ENCODE measurements at regions of chr18 and their contacts with region 1.

Region 1: GRCh38 chr18:74342416-74343043 is 26.9 kb downstream of the C18orf63 start:
- DNase-seq: peak; percentile 77
- ATAC-seq: peak; percentile 54
- H3K4me3 ChIP-seq: no peak overlapping the region
- H3K27ac ChIP-seq: no peak overlapping the region
- H3K4me1 ChIP-seq: no peaks in the 10 kb centered on the region; the same call in 1 of the 2 replicates
- H3K27me3 ChIP-seq: peaks cover 2% of the 10 kb centered on the region; the same call in 1 of the 2 replicates
- CTCF ChIP-seq: peak; percentile 77
- POLR2A ChIP-seq: no peak
- RAD21 ChIP-seq: peak; percentile 88

Region 2: DNA sequence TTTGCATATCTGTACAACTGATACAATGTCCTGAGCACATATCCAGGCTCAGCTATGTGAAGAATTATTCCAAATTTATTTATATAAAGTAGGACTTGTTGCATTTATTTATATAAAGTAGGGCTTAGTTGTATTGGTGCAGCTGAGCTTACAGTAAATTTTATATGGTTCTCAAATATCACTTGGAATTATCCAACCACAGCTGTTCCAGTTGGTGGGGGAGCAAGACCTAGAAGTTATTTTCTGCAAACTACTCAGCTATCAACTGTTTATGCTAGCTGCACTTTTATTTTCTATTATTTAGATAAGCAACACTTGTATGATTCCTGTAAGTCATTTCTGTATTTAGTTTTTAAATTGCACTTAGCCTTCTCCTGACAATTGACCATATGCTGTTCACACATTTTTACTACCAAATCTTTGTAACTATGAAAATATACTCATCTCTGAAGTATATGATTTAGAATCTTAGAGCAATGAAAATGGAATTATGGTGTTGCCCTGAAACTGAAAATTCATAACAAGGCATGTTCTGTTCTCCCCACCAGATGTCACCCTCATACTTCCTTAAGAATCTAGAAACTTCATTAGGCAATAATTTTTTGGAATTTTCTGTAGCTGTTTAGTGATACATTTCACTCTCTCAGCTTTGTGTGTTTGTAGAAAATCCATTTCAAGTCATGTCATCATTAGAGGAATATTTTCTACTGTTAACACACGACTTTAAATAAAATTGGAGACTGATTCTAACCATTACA is 1641.4 kb before region 1 on chr18:
- CTCF ChIA-PET with region 1: interaction called, 3 read pairs
- POLR2A ChIA-PET with region 1: no interaction called
- dilution Hi-C with region 1: no loop called
- in situ Hi-C with region 1: no loop called
- intact Hi-C with region 1: loop called (anchors 5 kb)
- DNase-seq: peak; percentile 14
- ATAC-seq: no peak
- H3K4me3 ChIP-seq: no peak overlapping the region
- H3K27ac ChIP-seq: no peak overlapping the region
- H3K4me1 ChIP-seq: no peaks in the 10 kb centered on the region
- H3K27me3 ChIP-seq: no peaks in the 10 kb centered on the region
- CTCF ChIP-seq: peak; percentile 48
- POLR2A ChIP-seq: no peak
- RAD21 ChIP-seq: peak; percentile 47

Region 3: DNA sequence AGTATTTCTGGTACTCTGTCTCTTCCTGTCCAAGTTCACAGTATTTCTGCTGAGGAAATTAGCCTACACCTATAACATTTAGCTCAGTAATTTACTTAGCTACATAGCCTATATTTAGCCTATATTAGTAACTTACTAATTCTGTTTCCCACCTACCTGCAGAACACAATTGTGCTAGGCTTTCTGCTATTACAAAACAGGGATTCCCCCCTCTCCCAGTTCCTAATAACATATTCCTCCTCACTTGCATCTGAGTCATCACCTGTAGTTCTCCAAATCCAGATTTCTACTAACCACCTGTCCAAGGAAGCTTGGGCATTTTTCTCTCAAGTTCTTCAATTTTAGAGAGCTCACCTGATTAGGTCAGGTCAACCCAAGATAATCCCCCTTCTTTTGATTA is 1569.6 kb before region 1 on chr18:
- CTCF ChIA-PET with region 1: no interaction called
- POLR2A ChIA-PET with region 1: no interaction called
- dilution Hi-C with region 1: no loop called
- in situ Hi-C with region 1: loop called (anchors 10 kb)
- intact Hi-C with region 1: no loop called
- DNase-seq: no peak
- ATAC-seq: no peak
- H3K4me3 ChIP-seq: no peak overlapping the region
- H3K27ac ChIP-seq: no peak overlapping the region
- H3K4me1 ChIP-seq: no peaks in the 10 kb centered on the region
- H3K27me3 ChIP-seq: no peaks in the 10 kb centered on the region
- CTCF ChIP-seq: no peak
- POLR2A ChIP-seq: no peak
- RAD21 ChIP-seq: no peak

Region 4: DNA sequence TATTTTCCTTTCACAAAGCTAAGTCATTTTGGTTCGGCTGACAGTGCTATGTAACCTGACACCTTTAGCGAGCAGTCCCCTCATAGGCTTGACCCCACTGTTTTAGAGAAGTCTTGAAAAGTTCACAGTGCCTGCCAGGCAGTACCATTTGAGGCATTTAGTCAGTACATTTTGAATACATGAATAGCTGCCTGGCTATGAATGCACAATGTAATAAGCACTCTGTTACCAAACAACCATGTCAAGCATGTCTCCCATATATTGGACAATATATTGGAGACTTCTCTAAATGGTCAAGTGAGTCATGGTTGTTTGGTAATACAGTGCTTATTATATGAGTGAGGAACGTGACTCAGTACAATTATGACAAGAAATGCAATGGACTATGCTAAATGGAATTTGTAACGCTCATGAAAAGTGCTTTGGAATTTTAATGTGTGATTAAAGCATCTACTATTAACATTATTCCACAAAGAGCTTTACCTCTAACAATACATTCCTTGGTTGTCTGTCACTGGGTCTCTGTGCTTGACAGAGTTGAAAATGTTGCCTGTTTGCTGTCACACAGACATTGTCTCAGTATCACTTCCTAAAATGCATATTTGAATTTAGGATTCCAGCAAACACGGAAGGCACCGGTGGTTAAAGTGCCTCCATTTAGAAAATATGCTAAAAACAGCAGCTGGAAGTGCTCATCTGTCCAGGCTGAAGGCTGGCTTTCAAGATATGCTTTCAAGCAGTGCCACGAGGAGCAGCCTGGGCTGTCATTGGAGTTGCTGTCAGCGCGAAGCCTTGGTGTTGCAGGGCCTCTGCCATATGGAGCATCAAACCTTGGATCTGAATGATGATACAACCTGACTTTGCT is 653.5 kb before region 1 on chr18:
- CTCF ChIA-PET with region 1: no interaction called
- POLR2A ChIA-PET with region 1: no interaction called
- dilution Hi-C with region 1: no loop called
- in situ Hi-C with region 1: no loop called
- intact Hi-C with region 1: loop called (anchors 10 kb)
- DNase-seq: peak; percentile 98
- ATAC-seq: peak; percentile 77
- H3K4me3 ChIP-seq: no peak overlapping the region
- H3K27ac ChIP-seq: peak overlapping the region; percentile 96
- H3K4me1 ChIP-seq: peaks cover 34% of the 10 kb centered on the region
- H3K27me3 ChIP-seq: no peaks in the 10 kb centered on the region
- CTCF ChIP-seq: no peak
- POLR2A ChIP-seq: 0 out of 2 replicates have a peak, but pooled peaks have one; percentile 24
- RAD21 ChIP-seq: no peak; the same call in 1 of the 2 replicates

Region 5: GRCh38 chr18:74040459-74041332 is 301.8 kb before region 1 on chr18:
- CTCF ChIA-PET with region 1: no interaction called
- POLR2A ChIA-PET with region 1: no interaction called
- dilution Hi-C with region 1: no loop called
- in situ Hi-C with region 1: no loop called
- intact Hi-C with region 1: loop called (anchors 10 kb)
- DNase-seq: peak; percentile 11
- ATAC-seq: peak; percentile 84
- H3K4me3 ChIP-seq: no peak overlapping the region
- H3K27ac ChIP-seq: no peak overlapping the region
- H3K4me1 ChIP-seq: no peaks in the 10 kb centered on the region
- H3K27me3 ChIP-seq: peaks cover 5% of the 10 kb centered on the region
- CTCF ChIP-seq: peak; percentile 47
- POLR2A ChIP-seq: no peak
- RAD21 ChIP-seq: peak; percentile 48

Region 6: DNA sequence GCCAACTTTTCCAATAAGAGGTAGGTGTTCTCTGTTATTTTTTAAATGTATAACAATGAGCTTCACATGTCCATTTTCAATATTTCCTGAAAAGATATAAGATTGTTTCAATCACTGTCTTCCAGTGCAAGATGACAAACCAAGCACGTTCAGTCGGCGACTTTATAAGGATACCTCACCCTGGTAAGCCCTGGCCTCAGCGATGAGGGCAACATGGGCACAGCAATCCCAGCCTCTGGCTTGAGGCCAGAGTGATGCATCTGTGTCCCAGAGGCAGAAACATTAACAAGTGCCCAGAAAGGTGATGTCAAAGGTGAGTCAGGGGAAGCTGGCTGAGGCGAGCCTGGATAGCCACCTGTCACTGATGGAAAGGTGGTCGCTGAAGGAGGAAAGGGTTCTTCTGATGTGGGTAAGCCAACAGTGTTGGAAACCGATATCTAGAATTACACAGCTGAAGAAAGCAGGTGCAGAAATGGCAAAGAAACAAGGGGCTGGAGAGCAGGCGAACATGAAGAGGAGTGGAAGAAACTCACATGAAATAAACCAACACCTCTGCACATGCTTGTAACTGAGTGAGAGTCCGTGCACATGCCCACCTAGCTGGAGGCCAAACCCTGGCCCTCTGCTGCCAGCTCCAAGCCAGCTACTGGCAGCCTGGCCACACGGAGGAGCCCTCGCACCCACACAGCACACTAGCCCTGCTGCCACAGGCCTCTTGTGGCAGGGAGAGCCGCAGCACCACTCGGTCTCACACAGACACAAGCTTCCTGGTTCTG is 260.4 kb before region 1 on chr18:
- CTCF ChIA-PET with region 1: interaction called, 9 read pairs
- POLR2A ChIA-PET with region 1: no interaction called
- dilution Hi-C with region 1: no loop called
- in situ Hi-C with region 1: no loop called
- intact Hi-C with region 1: loop called (anchors 1 kb)
- DNase-seq: peak; percentile 63
- ATAC-seq: peak; percentile 99
- H3K4me3 ChIP-seq: no peak overlapping the region
- H3K27ac ChIP-seq: no peak overlapping the region
- H3K4me1 ChIP-seq: peaks cover 7% of the 10 kb centered on the region
- H3K27me3 ChIP-seq: peaks cover 14% of the 10 kb centered on the region
- CTCF ChIP-seq: peak; percentile 73
- POLR2A ChIP-seq: no peak
- RAD21 ChIP-seq: peak; percentile 62

Region 7: GRCh38 chr18:74196220-74197119 is 146.1 kb before region 1 on chr18:
- CTCF ChIA-PET with region 1: interaction called, 23 read pairs
- POLR2A ChIA-PET with region 1: interaction called, 3 read pairs
- dilution Hi-C with region 1: no loop called
- in situ Hi-C with region 1: no loop called
- intact Hi-C with region 1: loop called (anchors 1 kb)
- DNase-seq: peak; percentile 66
- ATAC-seq: peak; percentile 92
- H3K4me3 ChIP-seq: peak overlapping the region; percentile 24; the same call in 1 of the 2 replicates
- H3K27ac ChIP-seq: no peak overlapping the region
- H3K4me1 ChIP-seq: peaks cover 3% of the 10 kb centered on the region; the same call in 1 of the 2 replicates
- H3K27me3 ChIP-seq: peaks cover 13% of the 10 kb centered on the region
- CTCF ChIP-seq: peak; percentile 87
- POLR2A ChIP-seq: 0 out of 2 replicates have a peak, but pooled peaks have one; percentile 29
- RAD21 ChIP-seq: peak; percentile 91

Region 8: GRCh38 chr18:74281639-74282358 is 60.7 kb before region 1 on chr18:
- CTCF ChIA-PET with region 1: no interaction called
- POLR2A ChIA-PET with region 1: no interaction called
- dilution Hi-C with region 1: no loop called
- in situ Hi-C with region 1: no loop called
- intact Hi-C with region 1: no loop called
- DNase-seq: no peak
- ATAC-seq: peak; percentile 30; the same call in 1 of the 2 replicates
- H3K4me3 ChIP-seq: no peak overlapping the region
- H3K27ac ChIP-seq: no peak overlapping the region
- H3K4me1 ChIP-seq: peaks cover 11% of the 10 kb centered on the region
- H3K27me3 ChIP-seq: no peaks in the 10 kb centered on the region
- CTCF ChIP-seq: no peak
- POLR2A ChIP-seq: no peak
- RAD21 ChIP-seq: no peak